ENCODE measurements at regions of chr3 and their contacts with region 1.

Region 1: GRCh38 chr3:181709537-181710279 is 2.0 kb upstream of the SOX2 start:
- DNase-seq: peak in 3 of 4 donors; percentile 63 to 86 (median 74)
- ATAC-seq: peak; percentile 64
- H3K4me3 ChIP-seq: no peak overlapping the region
- H3K27ac ChIP-seq: no peak overlapping the region
- H3K4me1 ChIP-seq: peaks cover 0 to 35% of the 10 kb centered on the region in 2 donors
- H3K27me3 ChIP-seq: peaks cover 99 to 100% of the 10 kb centered on the region in 2 donors
- CTCF ChIP-seq: peak; percentile 70 to 81

Region 2: DNA sequence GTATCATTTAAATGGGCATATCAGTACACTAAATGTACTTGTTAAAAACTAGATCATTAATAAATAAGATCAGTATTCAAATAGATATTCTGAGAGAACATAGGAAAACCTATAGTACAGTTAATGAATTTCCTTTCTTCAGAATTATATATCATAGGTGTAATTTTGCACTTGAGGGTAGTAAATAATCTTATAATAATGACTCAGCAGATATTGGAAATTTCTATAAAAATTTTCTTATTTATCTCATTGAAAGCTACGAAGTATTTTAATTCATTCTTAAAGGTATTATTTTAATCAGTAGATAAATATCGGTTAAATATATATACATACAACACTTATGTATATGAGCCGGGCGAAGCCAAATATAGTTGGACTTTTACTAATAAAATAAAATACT is 298.8 kb before region 1 on chr3:
- intact Hi-C with region 1: no loop called
- DNase-seq: no peak
- ATAC-seq: no peak
- H3K4me3 ChIP-seq: no peak overlapping the region
- H3K27ac ChIP-seq: no peak overlapping the region
- H3K4me1 ChIP-seq: no peaks in the 10 kb centered on the region
- H3K27me3 ChIP-seq: no peaks in the 10 kb centered on the region
- CTCF ChIP-seq: no peak

Region 3: GRCh38 chr3:181851059-181851458 is 141.4 kb after region 1 on chr3:
- intact Hi-C with region 1: no loop called
- DNase-seq: peak in 2 of 4 donors; percentile 16 to 52
- ATAC-seq: peak; percentile 92
- H3K4me3 ChIP-seq: no peak overlapping the region
- H3K27ac ChIP-seq: no peak overlapping the region
- H3K4me1 ChIP-seq: no peaks in the 10 kb centered on the region
- H3K27me3 ChIP-seq: no peaks in the 10 kb centered on the region
- CTCF ChIP-seq: no peak

Region 4: GRCh38 chr3:182261041-182261440 is 551.3 kb after region 1 on chr3:
- intact Hi-C with region 1: loop called in 1 of 2 experiments (anchors 5 kb)
- DNase-seq: peak in 1 of 4 donors; percentile 32
- ATAC-seq: no peak
- H3K4me3 ChIP-seq: no peak overlapping the region
- H3K27ac ChIP-seq: no peak overlapping the region
- H3K4me1 ChIP-seq: no peaks in the 10 kb centered on the region
- H3K27me3 ChIP-seq: peaks cover 4 to 19% of the 10 kb centered on the region in 2 donors
- CTCF ChIP-seq: no peak

Region 5: GRCh38 chr3:182683453-182683852 is 973.7 kb after region 1 on chr3:
- intact Hi-C with region 1: loop called in 1 of 2 experiments (anchors 5 kb)
- DNase-seq: peak in 2 of 4 donors; percentile 62 to 75
- ATAC-seq: peak; percentile 95
- H3K4me3 ChIP-seq: no peak overlapping the region
- H3K27ac ChIP-seq: no peak overlapping the region
- H3K4me1 ChIP-seq: peaks cover 0 to 18% of the 10 kb centered on the region in 2 donors
- H3K27me3 ChIP-seq: peaks cover 25 to 67% of the 10 kb centered on the region in 2 donors
- CTCF ChIP-seq: peak; percentile 77 to 82

Measured in left lung (tissue), 14 donors.